Panc1 (cell line): ENCODE measurements at regions of chrX and their contacts with region 1.

Region 1: DNA sequence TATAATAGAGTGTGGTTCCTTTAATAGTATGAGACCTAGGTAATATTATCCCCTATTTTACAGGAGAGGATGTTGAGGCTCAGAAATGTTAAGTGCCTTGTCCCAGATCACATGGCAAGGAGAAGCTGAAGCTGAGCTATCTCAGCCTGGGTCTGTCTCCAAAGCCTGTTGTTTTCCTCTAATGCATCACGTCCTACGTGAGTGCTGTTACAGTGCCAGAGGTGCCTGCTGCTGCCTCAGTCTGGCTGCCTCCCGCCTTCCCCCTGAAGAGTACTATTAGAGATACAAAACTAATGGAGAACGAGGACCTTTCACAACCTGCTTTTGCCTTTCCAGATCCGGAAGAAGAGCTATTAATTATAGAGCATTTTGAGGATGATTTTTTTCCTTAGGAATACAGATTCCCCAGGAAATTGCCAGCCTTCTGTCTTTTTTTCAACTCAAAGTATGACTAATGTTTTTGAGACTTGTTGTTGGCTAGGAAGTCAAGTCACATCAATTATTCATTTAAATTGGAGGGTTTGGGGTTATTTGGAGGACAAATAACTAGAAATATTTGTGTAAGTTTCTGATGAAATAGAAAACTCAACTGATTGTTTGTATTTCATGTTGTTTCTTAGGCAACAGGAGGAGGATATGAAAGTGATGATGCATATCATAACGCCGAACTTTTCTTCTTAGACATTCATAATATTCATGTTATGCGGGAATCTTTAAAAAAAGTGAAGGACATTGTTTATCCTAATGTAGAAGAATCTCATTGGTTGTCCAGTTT is 43.9 kb upstream of the MTMR1 start:
- DNase-seq: no peak
- ATAC-seq: no peak
- H3K4me3 ChIP-seq: no peak overlapping the region
- H3K27ac ChIP-seq: no peak overlapping the region
- H3K4me1 ChIP-seq: no peaks in the 10 kb centered on the region
- H3K27me3 ChIP-seq: no peaks in the 10 kb centered on the region
- CTCF ChIP-seq: no peak

Region 2: DNA sequence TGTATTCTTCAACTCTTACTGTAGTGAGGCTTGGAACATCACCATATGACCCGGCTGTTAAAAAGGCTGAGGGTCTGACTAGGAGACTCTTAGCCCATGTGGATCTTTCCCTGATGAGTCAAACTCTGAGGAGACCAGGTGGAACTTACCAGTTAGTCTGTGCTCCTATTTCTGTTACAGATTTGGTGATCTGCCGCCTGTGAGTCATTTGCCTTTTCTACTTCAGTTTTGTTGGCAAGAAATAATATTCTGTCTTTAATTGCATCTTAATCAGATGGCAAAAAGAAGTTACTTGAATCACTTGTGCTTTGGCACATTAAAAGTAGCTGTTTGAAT is 32.5 kb before region 1 on chrX:
- CTCF ChIA-PET with region 1: no interaction called
- POLR2A ChIA-PET with region 1: interaction called, 10 read pairs
- in situ Hi-C with region 1: no loop called
- intact Hi-C with region 1: no loop called
- DNase-seq: no peak
- ATAC-seq: no peak
- H3K4me3 ChIP-seq: no peak overlapping the region
- H3K27ac ChIP-seq: no peak overlapping the region
- H3K4me1 ChIP-seq: no peaks in the 10 kb centered on the region
- H3K27me3 ChIP-seq: no peaks in the 10 kb centered on the region
- CTCF ChIP-seq: no peak